PC-9 (cell line): ENCODE measurements at regions of chr4 and their contacts with region 1.

Region 1: GRCh38 chr4:124105212-124105611 is 607.3 kb downstream of the ANKRD50 start:
- DNase-seq: no peak
- H3K4me3 ChIP-seq: no peak overlapping the region
- H3K27ac ChIP-seq: no peak overlapping the region
- H3K4me1 ChIP-seq: no peaks in the 10 kb centered on the region
- H3K27me3 ChIP-seq: no peaks in the 10 kb centered on the region
- CTCF ChIP-seq: no peak

Region 2: GRCh38 chr4:123750044-123750443 is 355.2 kb before region 1 on chr4:
- CTCF ChIA-PET with region 1: no interaction called
- POLR2A ChIA-PET with region 1: no interaction called
- intact Hi-C with region 1: loop called (anchors 10 kb)
- DNase-seq: peak; percentile 36 to 40
- H3K4me3 ChIP-seq: no peak overlapping the region
- H3K27ac ChIP-seq: no peak overlapping the region
- H3K4me1 ChIP-seq: peaks cover 7% of the 10 kb centered on the region; the same call in 1 of the 2 replicates
- H3K27me3 ChIP-seq: no peaks in the 10 kb centered on the region
- CTCF ChIP-seq: no peak

Region 3: GRCh38 chr4:123826896-123827295 is 278.3 kb before region 1 on chr4:
- CTCF ChIA-PET with region 1: no interaction called
- POLR2A ChIA-PET with region 1: no interaction called
- intact Hi-C with region 1: loop called (anchors 2 kb)
- DNase-seq: peak in 1 of 2 experiments; percentile 27
- H3K4me3 ChIP-seq: no peak overlapping the region
- H3K27ac ChIP-seq: no peak overlapping the region
- H3K4me1 ChIP-seq: no peaks in the 10 kb centered on the region
- H3K27me3 ChIP-seq: no peaks in the 10 kb centered on the region
- CTCF ChIP-seq: no peak

Region 4: GRCh38 chr4:124177647-124178425 is 72.6 kb after region 1 on chr4:
- CTCF ChIA-PET with region 1: no interaction called
- POLR2A ChIA-PET with region 1: no interaction called
- intact Hi-C with region 1: no loop called
- DNase-seq: peak in 1 of 2 experiments; percentile 95
- H3K4me3 ChIP-seq: peak overlapping the region; percentile 24; the same call in 1 of the 2 replicates
- H3K27ac ChIP-seq: peak overlapping the region; percentile 95
- H3K4me1 ChIP-seq: peaks cover 26% of the 10 kb centered on the region
- H3K27me3 ChIP-seq: no peaks in the 10 kb centered on the region
- CTCF ChIP-seq: no peak

Region 5: GRCh38 chr4:124432500-124432899 is 327.3 kb after region 1 on chr4:
- CTCF ChIA-PET with region 1: no interaction called
- POLR2A ChIA-PET with region 1: no interaction called
- intact Hi-C with region 1: no loop called
- DNase-seq: peak in 1 of 2 experiments; percentile 66
- H3K4me3 ChIP-seq: no peak overlapping the region
- H3K27ac ChIP-seq: no peak overlapping the region
- H3K4me1 ChIP-seq: peaks cover 4% of the 10 kb centered on the region
- H3K27me3 ChIP-seq: no peaks in the 10 kb centered on the region
- CTCF ChIP-seq: no peak